CD4-positive, alpha-beta memory T cell (primary cell): ENCODE measurements at regions of chr1 and their contacts with region 1.

Region 1: DNA sequence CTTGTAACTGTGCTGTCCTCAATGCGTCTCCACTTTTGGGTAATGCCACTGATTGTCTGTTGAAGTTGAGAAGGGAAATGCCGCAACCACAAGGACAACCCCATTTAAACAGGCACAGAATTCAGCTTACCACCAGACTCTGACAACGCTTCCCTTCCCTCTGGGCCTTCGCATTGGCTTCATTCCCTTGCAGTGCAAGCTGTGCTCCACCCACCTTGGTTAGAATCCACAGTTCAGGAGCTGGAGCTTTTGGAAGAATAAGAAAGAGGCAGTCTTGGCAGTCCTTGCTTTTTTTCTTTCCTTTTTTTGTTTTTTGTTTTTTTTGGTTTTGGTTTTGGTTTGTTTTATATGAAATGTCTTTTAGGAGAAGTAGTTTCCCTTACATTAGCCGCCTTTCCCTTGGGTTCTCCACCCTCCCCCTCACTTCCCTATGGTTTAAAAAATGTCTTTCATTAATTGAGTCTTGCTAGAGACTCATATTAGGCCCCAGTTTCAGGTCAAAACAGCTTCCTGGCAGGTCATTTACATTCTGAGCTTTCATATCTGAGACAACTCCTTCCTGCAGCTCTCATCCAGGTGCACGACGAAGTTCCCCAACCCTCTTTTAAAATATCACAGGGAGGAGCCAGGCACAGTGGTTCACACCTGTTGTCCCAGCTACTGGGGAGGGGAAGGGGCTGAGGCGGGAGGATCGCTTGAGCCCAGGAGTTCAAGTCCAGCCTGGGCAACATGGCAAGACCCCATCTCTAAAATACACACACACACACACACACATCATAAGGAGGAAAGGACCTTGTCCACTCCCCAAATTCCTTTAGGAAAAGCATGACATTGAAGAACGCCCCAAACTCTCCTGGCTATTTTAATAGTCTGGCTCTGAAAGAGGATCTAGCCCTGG is 20.7 kb upstream of the LAX1 start:
- DNase-seq: peak; percentile 39 to 75 (median 58)
- H3K4me3 ChIP-seq: peak overlapping the region in 1 of 2 donors; percentile 41
- H3K4me3 Mint-ChIP-seq: peak overlapping the region; percentile 61 to 86 (median 74)
- H3K27ac ChIP-seq: peak overlapping the region; percentile 50
- H3K27ac Mint-ChIP-seq: peak overlapping the region; percentile 89 to 97 (median 95)
- H3K4me1 ChIP-seq: peaks cover 15% of the 10 kb centered on the region
- H3K4me1 Mint-ChIP-seq: peaks cover 24 to 32% (median 28%) of the 10 kb centered on the region in 4 donors
- H3K27me3 ChIP-seq: no peaks in the 10 kb centered on the region
- H3K27me3 Mint-ChIP-seq: no peaks in the 10 kb centered on the region

Region 2: GRCh38 chr1:203153989-203154821 is 590.1 kb before region 1 on chr1:
- CTCF ChIA-PET with region 1: no interaction called
- POLR2A ChIA-PET with region 1: no interaction called
- intact Hi-C with region 1: no loop called
- DNase-seq: no peak
- H3K4me3 ChIP-seq: no peak overlapping the region
- H3K4me3 Mint-ChIP-seq: no peak overlapping the region
- H3K27ac ChIP-seq: no peak overlapping the region
- H3K27ac Mint-ChIP-seq: no peak overlapping the region
- H3K4me1 ChIP-seq: no peaks in the 10 kb centered on the region
- H3K4me1 Mint-ChIP-seq: no peaks in the 10 kb centered on the region
- H3K27me3 ChIP-seq: no peaks in the 10 kb centered on the region
- H3K27me3 Mint-ChIP-seq: peaks cover 0 to 2% of the 10 kb centered on the region in 2 donors

Region 3: DNA sequence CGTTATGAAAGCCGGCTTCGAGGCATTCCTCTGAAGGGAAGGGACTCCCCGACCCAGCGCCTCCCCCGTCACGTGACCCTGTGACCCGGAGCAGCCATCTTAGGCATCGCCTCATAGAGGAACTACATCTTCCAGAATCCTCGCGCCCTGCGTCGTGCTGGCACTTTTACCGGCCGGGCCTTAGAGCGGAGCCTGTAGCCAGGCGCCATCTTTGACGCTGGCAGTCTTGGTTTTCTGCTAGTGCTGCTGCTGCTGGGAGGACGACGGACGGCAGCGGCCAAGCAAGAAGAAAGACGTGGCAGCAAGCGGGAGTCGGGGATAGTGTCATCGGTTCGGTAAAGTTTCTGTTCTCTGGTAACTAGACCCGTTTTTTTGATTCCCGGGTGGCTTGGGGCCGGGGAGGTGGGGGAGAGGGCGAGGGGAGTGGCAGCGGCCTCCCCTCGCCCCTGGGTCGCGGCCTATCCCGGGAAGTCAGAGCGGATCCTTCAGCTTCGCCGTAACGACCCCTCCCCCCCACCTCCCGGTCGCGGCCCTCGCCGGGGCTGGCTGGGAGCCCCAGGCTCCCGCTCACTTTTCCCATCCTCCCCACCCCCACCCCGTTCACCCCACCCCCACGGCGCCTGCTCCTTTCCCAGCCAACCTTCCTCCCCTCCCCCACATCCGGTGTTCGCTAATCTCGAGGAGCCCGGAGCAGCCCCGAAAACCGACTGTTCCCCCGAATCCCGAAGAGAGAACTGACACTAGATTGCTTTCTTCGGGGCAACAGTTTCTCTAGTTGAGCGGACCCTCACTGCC is 51.3 kb after region 1 on chr1 and contains the starts of genes ZBED6 and ZC3H11A:
- CTCF ChIA-PET with region 1: no interaction called
- POLR2A ChIA-PET with region 1: interaction called, 3 read pairs
- intact Hi-C with region 1: loop called (anchors 10 kb)
- DNase-seq: peak; percentile 96 to 100 (median 98)
- H3K4me3 ChIP-seq: peak within 1 kb of the TSS; percentile 72 to 74
- H3K4me3 Mint-ChIP-seq: peak within 1 kb of the TSS; percentile 91 to 99 (median 97)
- H3K27ac ChIP-seq: peak within 1 kb of the TSS; percentile 81
- H3K27ac Mint-ChIP-seq: peak within 1 kb of the TSS; percentile 86 to 99 (median 98)
- H3K4me1 ChIP-seq: peaks cover 51% of the 10 kb centered on the region
- H3K4me1 Mint-ChIP-seq: peaks cover 35 to 57% (median 48%) of the 10 kb centered on the region in 4 donors
- H3K27me3 ChIP-seq: no peaks in the 10 kb centered on the region
- H3K27me3 Mint-ChIP-seq: no peaks in the 10 kb centered on the region
- total RNA-seq, gene ZBED6: 26.5 to 29.3 TPM
- total RNA-seq, gene ZC3H11A: 132 to 141 TPM